Left cardiac atrium (tissue), 4 donors: ENCODE measurements at regions of chr5 and their contacts with region 1.

Region 1: GRCh38 chr5:16797951-16798350 is 138.1 kb downstream of the MYO10 start:
- DNase-seq: no peak
- ATAC-seq: no peak

Region 2: DNA sequence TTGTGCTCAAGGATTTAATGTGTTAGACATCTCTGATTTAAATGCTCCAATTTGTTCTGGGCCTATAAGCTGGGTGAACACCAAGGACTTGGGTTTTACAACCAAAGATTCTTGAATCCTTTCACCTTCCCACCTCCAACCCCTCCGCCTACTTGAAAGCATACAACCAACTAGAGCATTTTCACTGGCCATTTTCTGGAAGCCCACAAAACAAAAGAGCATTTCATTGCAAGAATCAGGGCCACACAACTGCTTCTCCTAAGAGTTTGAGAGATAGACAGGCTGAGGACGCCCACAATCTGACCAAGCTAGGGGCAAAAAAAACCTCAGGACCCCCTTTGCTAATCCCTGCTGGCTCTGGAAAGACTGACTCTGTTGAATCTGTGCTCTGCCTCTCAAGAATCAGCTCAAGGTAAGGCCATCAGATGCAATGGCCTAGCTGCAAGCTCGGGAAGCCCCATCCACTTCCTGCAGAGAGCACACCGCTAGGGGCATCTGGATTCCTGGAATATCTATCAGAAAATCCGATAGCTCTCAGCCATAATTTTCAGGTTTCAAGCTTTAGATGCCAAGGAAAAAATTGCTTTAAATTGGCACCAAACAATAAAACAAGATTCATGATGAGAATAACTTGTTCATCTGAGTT is 238.8 kb before region 1 on chr5:
- intact Hi-C with region 1: no loop called
- DNase-seq: no peak
- ATAC-seq: no peak

Region 3: DNA sequence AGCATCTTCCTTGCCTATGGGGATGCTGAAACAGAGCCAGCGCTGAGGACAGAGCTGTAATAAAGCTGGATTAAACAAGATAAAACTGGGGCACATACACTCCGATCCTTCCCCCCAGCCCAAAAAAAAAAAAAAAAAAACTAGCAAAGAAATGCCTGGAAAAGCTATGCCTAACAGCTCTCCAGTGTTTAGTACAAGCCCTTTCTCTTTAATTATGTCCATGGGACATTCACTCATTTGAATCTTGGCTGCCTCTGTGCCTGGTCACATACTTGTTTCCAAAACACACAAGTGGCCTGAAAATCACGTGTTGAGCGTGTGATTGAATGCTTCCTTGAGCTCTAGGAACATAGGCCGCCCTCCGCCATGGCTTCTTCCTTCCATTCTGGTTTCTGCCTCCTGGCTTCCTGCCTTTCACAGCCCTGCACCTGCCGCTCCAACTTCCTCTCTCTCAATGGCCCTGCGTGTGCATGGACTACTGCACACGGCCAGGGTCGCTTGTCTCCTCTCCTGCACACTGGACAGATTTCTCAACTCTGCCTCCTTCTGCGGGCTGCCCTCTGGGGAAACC is 70.1 kb before region 1 on chr5:
- intact Hi-C with region 1: no loop called
- DNase-seq: no peak
- ATAC-seq: peak; percentile 18 to 74

Region 4: DNA sequence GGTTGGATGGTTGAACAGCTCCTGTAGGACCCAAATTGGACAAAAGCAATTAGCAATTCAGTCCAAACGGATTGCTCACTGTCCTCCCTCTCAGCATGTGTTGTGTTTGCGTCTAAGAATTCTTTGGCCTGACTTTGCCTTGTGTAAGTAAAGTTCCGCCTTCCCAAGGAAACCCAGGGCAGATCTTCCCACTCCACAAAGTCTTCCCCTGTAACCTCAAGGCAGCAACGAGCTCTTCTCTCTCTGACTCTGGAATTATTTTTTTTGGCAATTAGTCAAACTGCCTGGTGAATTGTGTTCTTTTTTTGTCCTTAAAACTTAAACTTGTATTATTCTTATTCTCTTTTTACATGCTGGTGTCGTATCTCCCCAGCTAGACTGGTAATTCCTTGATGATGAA is 398.7 kb after region 1 on chr5:
- intact Hi-C with region 1: loop called in 1 of 2 experiments (anchors 5 kb)
- DNase-seq: no peak
- ATAC-seq: no peak